Vagina (tissue), 2 donors: ENCODE measurements at regions of chr11 and their contacts with region 1.

Region 1: DNA sequence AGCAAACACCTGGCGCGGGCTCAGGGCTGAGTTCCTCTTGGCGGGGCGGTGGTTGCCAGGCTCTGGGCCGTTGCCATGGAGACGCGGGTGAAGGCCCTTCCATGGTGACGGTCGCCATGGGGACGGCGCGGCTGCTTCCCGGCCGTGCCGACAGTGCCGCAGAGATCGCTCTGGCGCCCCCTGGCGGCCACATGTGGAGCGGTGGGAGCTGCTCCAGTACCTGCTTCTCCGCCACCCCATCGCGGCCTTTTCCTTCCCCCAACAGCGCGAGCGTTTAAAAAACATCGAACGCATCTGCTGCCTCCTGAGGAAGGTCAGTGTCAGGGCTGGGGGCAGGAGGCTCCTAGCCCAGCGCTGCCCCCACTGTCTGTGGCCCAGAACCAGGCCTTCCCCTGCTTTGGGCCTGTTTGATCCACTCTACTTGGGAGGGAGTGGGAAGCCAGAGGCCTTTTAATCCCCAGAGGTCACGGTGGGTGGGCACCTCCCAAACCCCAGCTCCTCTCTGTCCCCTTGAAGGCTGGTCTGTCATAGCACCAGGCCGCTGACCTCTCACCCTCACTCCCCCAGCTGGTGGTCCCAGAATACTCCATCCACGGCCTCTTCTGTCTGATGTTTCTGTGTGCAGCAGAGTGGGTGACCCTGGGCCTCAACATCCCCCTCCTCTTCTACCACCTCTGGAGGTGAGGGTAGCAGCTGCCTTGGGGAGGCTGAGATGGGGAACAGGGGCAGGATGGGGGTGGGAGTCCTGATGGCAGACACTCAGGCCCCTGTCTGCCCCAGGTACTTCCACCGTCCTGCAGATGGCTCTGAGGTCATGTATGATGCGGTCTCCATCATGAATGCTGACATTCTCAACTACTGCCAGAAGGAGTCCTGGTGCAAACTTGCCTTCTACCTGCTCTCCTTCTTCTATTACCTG is 4.8 kb downstream of the CNIH2 start:
- DNase-seq: no peak
- H3K4me3 ChIP-seq: no peak overlapping the region
- H3K27ac ChIP-seq: no peak overlapping the region
- H3K4me1 ChIP-seq: peaks cover 35% of the 10 kb centered on the region
- H3K27me3 ChIP-seq: no peaks in the 10 kb centered on the region
- CTCF ChIP-seq: peak; percentile 91 to 98 (median 97)
- POLR2A ChIP-seq: no peak

Region 2: DNA sequence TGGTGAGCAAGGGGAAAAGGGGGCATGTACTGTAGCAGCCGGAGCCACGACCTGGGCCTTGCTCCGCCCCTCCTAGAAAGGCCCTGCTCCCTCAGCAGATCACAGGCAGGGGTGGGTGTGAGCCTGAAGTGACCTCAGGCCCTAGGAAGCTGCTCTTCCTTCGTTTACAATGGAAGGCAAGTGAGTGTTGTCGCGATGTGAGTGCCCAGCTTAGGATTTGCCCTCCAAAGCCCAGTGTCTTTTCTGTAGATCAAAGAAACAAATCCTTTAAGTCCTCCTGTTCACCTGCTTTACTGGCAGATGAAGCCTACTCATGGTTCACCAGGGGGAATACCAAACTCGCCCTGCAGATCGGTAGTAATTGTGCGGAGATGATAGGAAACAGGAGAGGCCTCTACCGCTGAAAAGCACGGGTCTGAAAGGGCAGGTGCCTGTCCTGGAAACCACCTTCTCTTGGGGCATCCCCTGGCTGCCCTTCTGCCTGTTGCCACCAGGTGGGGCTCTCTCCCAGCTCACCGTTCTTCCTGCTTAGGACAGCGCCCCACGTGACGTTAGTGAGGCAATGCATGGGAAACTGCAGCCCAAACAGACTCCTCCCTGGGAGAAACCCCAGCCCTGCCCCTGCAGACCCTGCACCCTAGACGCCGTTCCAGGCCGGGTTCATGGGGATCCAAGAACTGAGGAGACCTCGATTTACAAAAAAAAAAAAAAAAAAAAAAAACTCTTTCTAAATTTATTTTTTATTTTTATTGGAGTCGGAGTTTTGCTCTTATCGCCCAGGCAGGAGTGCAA is 60.2 kb before region 1 on chr11:
- intact Hi-C with region 1: loop called (anchors 10 kb)
- DNase-seq: peak in 1 of 2 donors; percentile 92
- H3K4me3 ChIP-seq: no peak overlapping the region
- H3K27ac ChIP-seq: no peak overlapping the region
- H3K4me1 ChIP-seq: no peaks in the 10 kb centered on the region
- H3K27me3 ChIP-seq: no peaks in the 10 kb centered on the region
- CTCF ChIP-seq: peak; percentile 93 to 100 (median 99)
- POLR2A ChIP-seq: no peak